GM12878 (cell line): ENCODE measurements at regions of chr4 and their contacts with region 1.

Region 1: DNA sequence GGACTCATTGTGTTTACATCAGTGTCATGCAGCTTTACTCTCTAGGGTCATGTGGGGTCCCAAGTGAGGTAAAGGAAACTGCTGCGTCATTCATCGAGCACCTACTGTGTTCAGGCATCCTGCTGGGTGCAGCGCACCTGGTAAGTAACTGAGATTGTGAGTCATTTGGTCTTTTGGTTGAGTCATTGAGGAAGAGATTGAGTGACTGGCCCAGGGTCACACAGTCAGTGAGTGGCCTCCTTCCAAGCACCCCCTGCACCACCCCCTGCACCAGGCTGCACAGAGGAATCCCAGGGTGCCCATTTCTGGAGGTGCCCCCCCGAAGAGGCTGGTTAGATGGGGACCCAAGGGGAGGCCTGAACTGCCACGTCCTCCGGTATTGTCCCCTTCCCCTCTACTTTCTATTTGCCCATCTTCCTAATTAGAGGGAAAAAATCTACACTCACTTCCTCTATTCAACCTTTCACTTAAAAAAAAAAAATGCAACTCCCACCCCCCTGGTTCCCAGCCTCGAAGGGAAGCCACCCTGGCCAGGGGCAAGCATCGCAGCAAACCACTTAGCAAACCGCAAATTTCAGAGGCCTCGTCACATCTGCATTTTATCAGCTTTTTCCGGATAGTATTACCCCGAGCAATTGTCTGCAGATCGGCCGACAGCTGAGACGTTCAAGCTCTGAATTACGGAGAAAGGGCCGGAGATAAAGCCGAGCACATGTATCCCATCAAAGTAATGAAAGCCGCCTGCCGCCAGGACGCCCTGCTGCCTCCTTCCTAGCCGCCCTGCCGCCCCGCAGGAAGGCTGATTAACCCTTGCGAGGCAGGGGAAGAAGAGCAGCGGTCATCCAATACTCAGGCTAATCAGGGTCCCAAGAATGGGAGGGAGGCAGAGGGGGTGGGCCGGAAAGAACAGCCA is 96.3 kb upstream of the MSX1 start:
- DNase-seq: peak; percentile 86
- ATAC-seq: peak; percentile 91
- H3K4me3 ChIP-seq: peak overlapping the region; percentile 46; the same call in 1 of the 2 replicates
- H3K27ac ChIP-seq: peak overlapping the region; percentile 71
- H3K4me1 ChIP-seq: peaks cover 34% of the 10 kb centered on the region
- H3K27me3 ChIP-seq: no peaks in the 10 kb centered on the region
- CTCF ChIP-seq: no peak
- EP300 ChIP-seq: peak; percentile 75 to 79; a peak in 3 of 4 replicates
- POLR2A ChIP-seq: no peak
- RAD21 ChIP-seq: no peak

Region 2: DNA sequence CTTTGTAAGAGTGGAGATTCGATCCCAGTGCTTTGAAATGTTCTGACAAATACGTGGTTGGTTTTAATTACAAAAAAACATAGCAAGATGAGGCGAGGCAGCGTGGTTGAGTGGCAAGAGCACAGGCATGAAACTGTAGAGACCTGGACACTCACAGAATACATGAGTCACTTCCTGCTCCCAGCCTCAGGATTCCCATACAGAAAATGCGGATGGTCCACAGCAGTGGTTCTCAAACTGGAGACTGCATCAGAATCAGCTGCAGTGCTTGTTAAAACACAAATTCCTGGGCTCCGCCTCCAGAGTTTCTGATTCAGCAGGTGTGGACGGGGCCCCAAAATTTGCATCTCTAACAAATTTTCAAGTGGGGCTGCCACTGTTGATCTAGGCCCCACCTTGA is 546.5 kb before region 1 on chr4:
- CTCF ChIA-PET with region 1: no interaction called
- POLR2A ChIA-PET with region 1: no interaction called
- RAD21 ChIA-PET with region 1: no interaction called
- SMC1A ChIA-PET with region 1: no interaction called
- in situ Hi-C with region 1: no loop called
- intact Hi-C with region 1: no loop called
- DNase-seq: no peak
- ATAC-seq: no peak
- H3K4me3 ChIP-seq: no peak overlapping the region
- H3K27ac ChIP-seq: no peak overlapping the region
- H3K4me1 ChIP-seq: no peaks in the 10 kb centered on the region
- H3K27me3 ChIP-seq: no peaks in the 10 kb centered on the region
- CTCF ChIP-seq: no peak
- EP300 ChIP-seq: no peak
- POLR2A ChIP-seq: no peak
- RAD21 ChIP-seq: no peak

Region 3: DNA sequence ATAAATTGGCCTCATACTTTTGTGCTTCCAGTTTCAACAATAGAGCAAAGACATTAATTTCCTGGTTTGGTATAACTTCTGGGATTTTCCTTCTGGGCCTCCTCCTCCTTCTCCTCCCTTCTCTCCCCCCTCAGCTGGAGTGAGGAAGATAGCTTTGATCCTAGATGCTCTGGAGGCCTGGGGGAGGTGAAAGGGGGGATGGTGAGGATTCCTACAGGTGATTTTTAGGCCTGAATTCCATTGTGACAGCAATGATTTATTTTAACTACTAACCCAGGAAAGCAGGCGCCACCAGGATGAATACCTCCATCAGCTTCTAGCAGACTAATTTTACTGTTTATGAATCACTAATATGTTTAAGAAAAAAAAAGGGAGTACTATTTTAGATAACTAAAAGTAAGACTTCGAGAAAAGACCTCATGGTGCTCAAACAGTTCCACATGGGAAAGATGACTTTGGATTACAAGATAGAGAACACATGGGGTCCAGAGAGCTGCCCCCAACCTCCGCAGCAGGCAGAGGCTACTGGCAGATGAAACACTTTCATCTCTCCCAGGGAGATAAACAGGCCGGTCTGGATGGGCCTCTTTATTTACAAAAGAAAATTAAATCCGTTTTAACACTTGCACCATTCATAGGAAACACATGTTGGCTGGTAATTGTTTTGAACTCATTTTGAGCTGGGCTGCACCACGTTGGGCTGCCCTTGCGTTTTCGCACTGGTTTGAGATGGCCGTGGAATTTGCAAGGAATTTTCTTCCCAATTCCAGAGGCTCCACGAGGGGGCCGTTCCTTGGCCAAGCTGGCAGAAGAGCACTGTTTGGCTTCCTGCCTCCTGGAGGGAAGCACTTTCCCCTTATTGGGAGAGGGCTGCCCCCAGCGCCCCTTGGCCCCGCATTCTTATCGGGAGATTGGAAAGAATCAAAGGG is 96.2 kb before region 1 on chr4:
- CTCF ChIA-PET with region 1: interaction called, 12 read pairs
- POLR2A ChIA-PET with region 1: no interaction called
- RAD21 ChIA-PET with region 1: no interaction called
- SMC1A ChIA-PET with region 1: no interaction called
- in situ Hi-C with region 1: no loop called
- intact Hi-C with region 1: no loop called
- DNase-seq: no peak
- ATAC-seq: no peak
- H3K4me3 ChIP-seq: no peak overlapping the region
- H3K27ac ChIP-seq: no peak overlapping the region
- H3K4me1 ChIP-seq: no peaks in the 10 kb centered on the region
- H3K27me3 ChIP-seq: no peaks in the 10 kb centered on the region
- CTCF ChIP-seq: no peak
- EP300 ChIP-seq: no peak
- POLR2A ChIP-seq: no peak
- RAD21 ChIP-seq: no peak

Region 4: GRCh38 chr4:4694296-4694772 is 68.8 kb before region 1 on chr4:
- CTCF ChIA-PET with region 1: no interaction called
- POLR2A ChIA-PET with region 1: interaction called, 6 read pairs
- RAD21 ChIA-PET with region 1: interaction called, 3 read pairs
- SMC1A ChIA-PET with region 1: interaction called, 3 read pairs
- in situ Hi-C with region 1: loop called (anchors 5 kb)
- intact Hi-C with region 1: loop called (anchors 1 kb)
- DNase-seq: no peak
- ATAC-seq: no peak
- H3K4me3 ChIP-seq: no peak overlapping the region
- H3K27ac ChIP-seq: no peak overlapping the region
- H3K4me1 ChIP-seq: peaks cover 13% of the 10 kb centered on the region
- H3K27me3 ChIP-seq: no peaks in the 10 kb centered on the region
- CTCF ChIP-seq: peak in 2 of 3 experiments; percentile 14 to 29; a peak in 1 of 6 replicates
- EP300 ChIP-seq: no peak
- POLR2A ChIP-seq: no peak
- RAD21 ChIP-seq: no peak